Activated T-helper 2 cell treated with anti-CD3 and anti-CD28 coated beads, Interferon-gamma antibody, Interleukin-2, Interleukin-4, amounts not matched to agents 10 μg/mL and 5 μg/mL and 100 μg/mL, durations not matched to agents 14 hours and 24 hours and 36 hours (primary cell): ENCODE measurements at regions of chr10 and their contacts with region 1.

Region 1: DNA sequence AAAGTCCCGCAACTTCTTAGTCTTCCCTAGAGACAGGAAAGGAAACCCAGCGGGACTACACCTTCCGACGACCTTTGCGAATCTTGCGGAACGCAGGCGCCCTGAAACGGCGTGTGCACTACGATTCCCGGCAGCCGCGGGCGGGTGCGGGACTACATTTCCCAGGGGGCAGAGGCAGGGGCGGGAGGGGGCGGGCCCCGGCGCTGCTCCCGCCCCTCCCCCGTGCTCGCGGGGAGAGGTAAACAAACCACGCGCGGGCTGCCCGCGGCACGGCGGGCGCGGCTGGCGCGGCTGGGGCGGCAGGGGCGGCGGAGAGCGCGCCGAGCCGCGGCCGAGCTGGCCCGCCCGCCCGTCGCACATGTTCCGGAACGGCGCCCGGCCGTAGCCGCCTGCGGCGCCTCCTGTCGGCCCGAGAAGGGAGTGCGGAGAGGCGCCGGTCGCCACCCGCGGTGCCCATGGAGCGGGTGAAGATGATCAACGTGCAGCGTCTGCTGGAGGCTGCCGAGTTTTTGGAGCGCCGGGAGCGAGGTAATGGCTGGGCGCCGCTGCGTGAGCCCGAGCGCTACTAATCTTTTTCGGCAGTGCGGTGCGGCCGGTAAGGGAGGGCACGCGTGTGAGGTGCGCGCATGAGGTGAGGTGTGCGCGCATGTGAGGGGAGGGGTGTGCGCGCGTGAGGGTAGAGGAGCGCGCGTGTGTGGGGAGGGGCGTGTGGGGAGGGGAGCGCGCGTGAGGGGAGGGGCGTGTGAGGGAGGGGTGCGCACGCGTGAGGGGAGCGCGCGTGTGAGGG is 18.5 kb downstream of the MXI1 start:
- DNase-seq: peak; percentile 79
- H3K4me3 Mint-ChIP-seq: peak overlapping the region; percentile 95
- H3K27ac Mint-ChIP-seq: peak overlapping the region; percentile 97
- H3K4me1 Mint-ChIP-seq: peaks cover 36% of the 10 kb centered on the region
- H3K27me3 Mint-ChIP-seq: peaks cover 18% of the 10 kb centered on the region

Region 2: DNA sequence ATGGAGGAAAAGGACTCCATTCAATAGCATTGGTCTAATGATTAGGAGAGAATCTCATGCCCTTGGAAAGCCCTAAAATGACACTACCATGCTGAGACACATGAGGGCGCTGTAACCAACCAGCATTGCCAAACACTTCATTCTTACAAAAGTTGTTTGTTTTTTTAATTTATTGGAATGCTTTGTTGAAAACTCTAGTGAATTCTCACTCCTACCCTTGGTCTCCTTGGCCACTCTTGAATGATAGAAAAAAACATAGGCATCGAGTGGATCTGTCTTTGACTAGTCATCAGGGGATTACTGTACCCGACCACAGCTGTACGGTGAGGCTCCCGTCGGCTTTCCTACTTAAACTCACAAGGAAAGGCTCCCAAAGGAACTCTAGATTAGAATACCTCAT is 247.5 kb before region 1 on chr10:
- intact Hi-C with region 1: no loop called
- DNase-seq: peak; percentile 43
- H3K4me3 Mint-ChIP-seq: no peak overlapping the region
- H3K27ac Mint-ChIP-seq: no peak overlapping the region
- H3K4me1 Mint-ChIP-seq: no peaks in the 10 kb centered on the region
- H3K27me3 Mint-ChIP-seq: peaks cover 24% of the 10 kb centered on the region

Region 3: GRCh38 chr10:110137142-110137545 is 88.8 kb before region 1 on chr10:
- intact Hi-C with region 1: loop called (anchors 1 kb)
- DNase-seq: no peak
- H3K4me3 Mint-ChIP-seq: no peak overlapping the region
- H3K27ac Mint-ChIP-seq: no peak overlapping the region
- H3K4me1 Mint-ChIP-seq: peaks cover 31% of the 10 kb centered on the region
- H3K27me3 Mint-ChIP-seq: no peaks in the 10 kb centered on the region

Region 4: GRCh38 chr10:110210674-110211464 is 15.1 kb before region 1 on chr10:
- intact Hi-C with region 1: loop called (anchors 1 kb)
- DNase-seq: peak; percentile 89
- H3K4me3 Mint-ChIP-seq: peak overlapping the region; percentile 89
- H3K27ac Mint-ChIP-seq: peak overlapping the region; percentile 93
- H3K4me1 Mint-ChIP-seq: peaks cover 61% of the 10 kb centered on the region
- H3K27me3 Mint-ChIP-seq: peaks cover 21% of the 10 kb centered on the region

Region 5: GRCh38 chr10:110279407-110279986 is 53.5 kb after region 1 on chr10:
- intact Hi-C with region 1: loop called (anchors 5 kb)
- DNase-seq: peak; percentile 17
- H3K4me3 Mint-ChIP-seq: no peak overlapping the region
- H3K27ac Mint-ChIP-seq: no peak overlapping the region
- H3K4me1 Mint-ChIP-seq: peaks cover 8% of the 10 kb centered on the region
- H3K27me3 Mint-ChIP-seq: peaks cover 31% of the 10 kb centered on the region

Region 6: GRCh38 chr10:110425684-110426293 is 199.8 kb after region 1 on chr10:
- intact Hi-C with region 1: loop called (anchors 10 kb)
- DNase-seq: peak; percentile 34
- H3K4me3 Mint-ChIP-seq: peak overlapping the region; percentile 28
- H3K27ac Mint-ChIP-seq: peak overlapping the region; percentile 85
- H3K4me1 Mint-ChIP-seq: peaks cover 60% of the 10 kb centered on the region
- H3K27me3 Mint-ChIP-seq: no peaks in the 10 kb centered on the region

Region 7: GRCh38 chr10:110567201-110568054 is 341.5 kb after region 1 on chr10 and contains the start of gene SMC3:
- intact Hi-C with region 1: loop called (anchors 5 kb)
- DNase-seq: peak; percentile 90
- H3K4me3 Mint-ChIP-seq: peak within 1 kb of the TSS; percentile 90
- H3K27ac Mint-ChIP-seq: peak within 1 kb of the TSS; percentile 98
- H3K4me1 Mint-ChIP-seq: peaks cover 51% of the 10 kb centered on the region
- H3K27me3 Mint-ChIP-seq: peaks cover 9% of the 10 kb centered on the region
- total RNA-seq, gene SMC3: 78.4 and 78.8 TPM in 2 replicates